ENCODE measurements at regions of chr5 and their contacts with region 1.

Region 1: GRCh38 chr5:127492854-127493738 is 24.3 kb upstream of the PRRC1 start:
- DNase-seq: peak; percentile 78
- H3K4me3 ChIP-seq: no peak overlapping the region
- H3K27ac ChIP-seq: no peak overlapping the region
- H3K4me1 ChIP-seq: no peaks in the 10 kb centered on the region
- H3K27me3 ChIP-seq: peaks cover 6 to 31% of the 10 kb centered on the region in 2 experiments
- CTCF ChIP-seq: peak; percentile 47 to 54
- POLR2A ChIP-seq: no peak

Region 2: GRCh38 chr5:126676195-126676624 is 816.9 kb before region 1 on chr5:
- CTCF ChIA-PET with region 1: interaction called, 14 read pairs
- POLR2A ChIA-PET with region 1: no interaction called
- dilution Hi-C with region 1: no loop called
- intact Hi-C with region 1: loop called (anchors 5 kb)
- DNase-seq: peak; percentile 56
- H3K4me3 ChIP-seq: no peak overlapping the region
- H3K27ac ChIP-seq: no peak overlapping the region
- H3K4me1 ChIP-seq: no peaks in the 10 kb centered on the region
- H3K27me3 ChIP-seq: peaks cover 3 to 7% of the 10 kb centered on the region in 2 experiments
- CTCF ChIP-seq: peak; percentile 72 to 75
- POLR2A ChIP-seq: no peak

Region 3: GRCh38 chr5:126965061-126965475 is 528.0 kb before region 1 on chr5:
- CTCF ChIA-PET with region 1: no interaction called
- POLR2A ChIA-PET with region 1: no interaction called
- dilution Hi-C with region 1: no loop called
- intact Hi-C with region 1: loop called (anchors 10 kb)
- DNase-seq: peak; percentile 74
- H3K4me3 ChIP-seq: no peak overlapping the region
- H3K27ac ChIP-seq: no peak overlapping the region
- H3K4me1 ChIP-seq: peaks cover 13% of the 10 kb centered on the region
- H3K27me3 ChIP-seq: no peaks in the 10 kb centered on the region
- CTCF ChIP-seq: no peak
- POLR2A ChIP-seq: no peak

Region 4: DNA sequence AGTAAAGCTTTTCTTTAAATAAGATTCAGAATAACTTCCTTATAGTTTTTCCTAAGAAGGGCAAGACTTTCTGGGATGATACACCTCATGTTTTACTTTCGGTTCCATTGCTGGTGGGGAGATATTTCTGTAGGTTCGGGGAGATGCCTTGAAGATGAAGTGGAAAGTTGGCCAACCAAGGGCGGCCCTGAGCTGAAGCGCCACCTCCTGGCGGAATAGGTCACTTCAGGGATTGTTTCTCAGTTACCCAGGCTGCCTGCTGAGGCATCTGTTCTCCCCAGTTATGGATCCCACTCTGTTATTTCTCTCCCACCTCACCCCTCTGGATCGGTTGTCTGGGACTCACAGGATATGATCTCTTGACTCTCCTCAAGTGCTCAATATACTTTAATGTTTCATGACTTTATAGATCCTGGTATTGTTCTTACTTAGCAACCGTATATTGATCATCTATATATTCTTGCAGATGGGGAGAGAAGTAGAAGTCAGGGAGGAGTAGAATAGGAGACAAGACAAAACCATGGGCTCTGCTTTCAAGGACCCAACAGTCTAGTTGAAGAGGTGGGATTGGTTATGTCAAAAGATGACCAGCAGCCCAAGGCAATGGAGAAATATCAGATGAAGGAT is 179.1 kb before region 1 on chr5:
- CTCF ChIA-PET with region 1: interaction called, 9 read pairs
- POLR2A ChIA-PET with region 1: no interaction called
- dilution Hi-C with region 1: no loop called
- intact Hi-C with region 1: loop called (anchors 1 kb)
- DNase-seq: peak; percentile 69
- H3K4me3 ChIP-seq: no peak overlapping the region
- H3K27ac ChIP-seq: no peak overlapping the region
- H3K4me1 ChIP-seq: no peaks in the 10 kb centered on the region
- H3K27me3 ChIP-seq: peaks cover 26 to 47% of the 10 kb centered on the region in 2 experiments
- CTCF ChIP-seq: peak; percentile 78 to 85
- POLR2A ChIP-seq: no peak

Region 5: GRCh38 chr5:127471211-127471610 is 21.9 kb before region 1 on chr5:
- CTCF ChIA-PET with region 1: interaction called, 20 read pairs
- POLR2A ChIA-PET with region 1: no interaction called
- dilution Hi-C with region 1: no loop called
- intact Hi-C with region 1: no loop called
- DNase-seq: peak; percentile 26
- H3K4me3 ChIP-seq: no peak overlapping the region
- H3K27ac ChIP-seq: no peak overlapping the region
- H3K4me1 ChIP-seq: no peaks in the 10 kb centered on the region
- H3K27me3 ChIP-seq: no peaks in the 10 kb centered on the region
- CTCF ChIP-seq: no peak
- POLR2A ChIP-seq: no peak

Region 6: GRCh38 chr5:127517480-127518318 is 24.6 kb after region 1 on chr5 and contains the start of gene PRRC1:
- CTCF ChIA-PET with region 1: interaction called, 25 read pairs
- POLR2A ChIA-PET with region 1: no interaction called
- dilution Hi-C with region 1: no loop called
- intact Hi-C with region 1: no loop called
- DNase-seq: peak; percentile 81
- H3K4me3 ChIP-seq: peak within 1 kb of the TSS; percentile 61 to 82 (median 68)
- H3K27ac ChIP-seq: peak within 1 kb of the TSS; percentile 69
- H3K4me1 ChIP-seq: peaks cover 14% of the 10 kb centered on the region
- H3K27me3 ChIP-seq: peaks cover 6 to 11% of the 10 kb centered on the region in 2 experiments
- CTCF ChIP-seq: no peak
- POLR2A ChIP-seq: peak; percentile 82
- total RNA-seq, gene PRRC1: 72.7 and 77.6 TPM in 2 replicates